Lower leg skin (tissue), 4 donors: ENCODE measurements at regions of chr4 and their contacts with region 1.

Region 1: DNA sequence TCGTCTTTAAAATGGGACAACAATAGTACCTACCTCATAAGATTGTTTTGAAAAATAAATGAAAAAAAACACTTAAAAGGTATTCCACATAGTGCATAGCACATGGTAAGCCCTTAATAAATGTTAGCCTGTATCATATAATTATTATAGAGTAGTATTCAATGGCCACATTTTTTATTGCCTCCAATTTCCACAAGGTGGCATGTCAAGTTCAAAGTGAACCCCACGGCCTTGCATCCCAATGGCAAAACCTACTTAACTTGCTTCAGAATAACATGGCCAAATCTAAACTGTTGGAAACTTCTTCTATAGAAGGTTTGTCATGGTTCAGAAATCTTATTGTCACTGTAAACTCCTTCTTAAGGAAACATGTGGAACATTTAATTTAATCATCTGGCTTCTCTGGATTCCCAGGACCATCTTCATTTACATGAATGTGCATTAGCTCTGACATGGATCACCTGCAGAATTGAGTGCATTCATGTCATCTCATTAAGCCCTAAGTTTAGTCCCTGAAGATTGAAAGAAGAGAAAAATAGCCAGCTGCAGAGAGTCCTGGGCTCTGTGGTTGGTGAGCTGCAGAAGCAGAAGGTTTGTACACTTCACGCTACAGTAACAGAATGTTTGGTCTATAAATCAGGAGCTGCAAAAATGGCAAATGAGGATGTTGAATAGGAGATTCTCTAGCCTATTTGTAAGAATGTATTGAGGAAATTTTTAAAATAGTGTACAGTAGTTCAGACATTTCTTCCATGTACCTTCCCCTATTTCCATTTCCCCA is 61.0 kb downstream of the ANXA3 start:
- DNase-seq: no peak
- H3K4me3 ChIP-seq: no peak overlapping the region
- CTCF ChIP-seq: no peak
- POLR2A ChIP-seq: no peak

Region 2: GRCh38 chr4:78656968-78657445 is 44.4 kb after region 1 on chr4:
- intact Hi-C with region 1: no loop called
- DNase-seq: peak in 1 of 2 donors; percentile 29
- H3K4me3 ChIP-seq: no peak overlapping the region
- CTCF ChIP-seq: no peak
- POLR2A ChIP-seq: no peak

Region 3: DNA sequence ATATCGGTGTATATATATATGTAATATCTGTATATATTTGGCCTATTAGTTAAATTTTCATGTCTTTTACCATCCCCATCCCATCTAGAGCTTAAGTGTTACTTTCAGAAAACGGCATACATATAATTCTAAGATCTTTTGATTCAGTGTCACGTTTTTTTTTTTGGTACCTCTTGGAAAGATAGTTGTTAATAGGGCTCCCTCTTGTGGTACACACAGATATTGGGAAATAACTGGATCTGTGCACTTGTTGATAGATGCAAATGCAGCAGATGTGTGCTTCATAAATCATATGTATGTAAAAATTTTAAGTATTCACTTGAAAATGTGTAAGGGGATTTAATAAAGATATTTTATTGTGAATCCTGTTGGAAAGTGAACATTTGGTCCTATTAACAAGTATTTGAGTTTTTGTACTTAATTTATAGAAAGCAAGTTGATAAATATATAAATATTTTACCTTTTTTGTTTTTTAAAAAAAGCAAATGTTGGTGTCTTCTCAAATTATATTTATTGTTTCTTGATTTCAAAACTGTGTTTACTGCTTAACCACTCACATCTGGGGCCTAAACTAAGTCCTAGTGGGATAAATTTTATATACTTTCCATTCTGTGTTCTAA is 251.9 kb after region 1 on chr4:
- intact Hi-C with region 1: loop called (anchors 5 kb)
- DNase-seq: peak in 1 of 2 donors; percentile 27
- H3K4me3 ChIP-seq: no peak overlapping the region
- CTCF ChIP-seq: peak in 1 of 3 donors; percentile 19
- POLR2A ChIP-seq: no peak

Region 4: GRCh38 chr4:80295336-80295735 is 1682.7 kb after region 1 on chr4:
- intact Hi-C with region 1: no loop called
- DNase-seq: no peak
- H3K4me3 ChIP-seq: no peak overlapping the region
- CTCF ChIP-seq: no peak
- POLR2A ChIP-seq: no peak